Naive thymus-derived CD4-positive, alpha-beta T cell (primary cell): ENCODE measurements at regions of chr17 and their contacts with region 1.

Region 1: GRCh38 chr17:49707608-49708514 is at the start of gene SLC35B1:
- DNase-seq: peak; percentile 89 to 99 (median 97)
- ATAC-seq: peak; percentile 98
- H3K4me3 ChIP-seq: peak within 1 kb of the TSS; percentile 96
- H3K4me3 Mint-ChIP-seq: peak within 1 kb of the TSS; percentile 91 to 97 (median 96)
- H3K27ac ChIP-seq: peak within 1 kb of the TSS; percentile 94
- H3K27ac Mint-ChIP-seq: peak within 1 kb of the TSS; percentile 89 to 99 (median 96)
- H3K4me1 ChIP-seq: peaks cover 22 to 27% of the 10 kb centered on the region in 2 donors
- H3K4me1 Mint-ChIP-seq: peaks cover 30 to 47% (median 42%) of the 10 kb centered on the region in 7 donors
- H3K27me3 ChIP-seq: no peaks in the 10 kb centered on the region
- H3K27me3 Mint-ChIP-seq: no peaks in the 10 kb centered on the region
- total RNA-seq, gene SLC35B1: 42.1 to 83.0 (median 49.0) TPM

Region 2: DNA sequence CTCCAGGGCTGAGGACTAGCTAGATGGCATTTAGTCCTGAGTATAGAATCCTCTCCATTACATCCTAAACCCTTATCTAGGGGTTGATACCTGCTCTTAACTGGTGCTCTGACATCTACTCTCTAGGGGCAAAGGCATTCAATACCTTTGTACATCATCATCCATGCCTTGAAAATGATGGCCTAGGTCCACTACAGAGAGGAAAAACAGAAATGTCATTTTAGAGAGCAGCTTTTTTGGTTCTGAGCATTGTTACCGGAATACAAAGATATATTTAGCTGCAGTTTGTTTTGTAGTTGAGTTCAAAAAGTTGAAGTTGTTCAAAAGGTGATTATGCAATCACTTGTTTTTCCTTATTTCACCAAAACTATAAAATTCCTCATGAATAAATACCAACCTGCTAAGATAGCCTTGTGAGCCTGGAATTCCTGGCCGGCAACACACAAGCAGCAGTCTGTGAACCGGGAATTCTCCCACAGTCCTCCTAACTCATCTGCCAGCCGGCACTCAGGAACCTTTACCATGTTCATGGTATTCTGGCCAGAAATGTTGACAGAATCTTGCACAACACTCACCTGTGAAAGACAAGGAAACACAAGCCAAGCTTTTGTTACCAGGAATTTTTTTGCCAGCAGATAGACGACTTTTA is 96.9 kb before region 1 on chr17:
- CTCF ChIA-PET with region 1: no interaction called
- POLR2A ChIA-PET with region 1: no interaction called
- intact Hi-C with region 1: no loop called
- DNase-seq: no peak
- ATAC-seq: no peak
- H3K4me3 ChIP-seq: no peak overlapping the region
- H3K4me3 Mint-ChIP-seq: no peak overlapping the region
- H3K27ac ChIP-seq: no peak overlapping the region
- H3K27ac Mint-ChIP-seq: peak overlapping the region in 1 of 9 donors; percentile 38
- H3K4me1 ChIP-seq: no peaks in the 10 kb centered on the region
- H3K4me1 Mint-ChIP-seq: peaks cover 0 to 5% (median 0%) of the 10 kb centered on the region in 7 donors
- H3K27me3 ChIP-seq: no peaks in the 10 kb centered on the region
- H3K27me3 Mint-ChIP-seq: no peaks in the 10 kb centered on the region

Region 3: DNA sequence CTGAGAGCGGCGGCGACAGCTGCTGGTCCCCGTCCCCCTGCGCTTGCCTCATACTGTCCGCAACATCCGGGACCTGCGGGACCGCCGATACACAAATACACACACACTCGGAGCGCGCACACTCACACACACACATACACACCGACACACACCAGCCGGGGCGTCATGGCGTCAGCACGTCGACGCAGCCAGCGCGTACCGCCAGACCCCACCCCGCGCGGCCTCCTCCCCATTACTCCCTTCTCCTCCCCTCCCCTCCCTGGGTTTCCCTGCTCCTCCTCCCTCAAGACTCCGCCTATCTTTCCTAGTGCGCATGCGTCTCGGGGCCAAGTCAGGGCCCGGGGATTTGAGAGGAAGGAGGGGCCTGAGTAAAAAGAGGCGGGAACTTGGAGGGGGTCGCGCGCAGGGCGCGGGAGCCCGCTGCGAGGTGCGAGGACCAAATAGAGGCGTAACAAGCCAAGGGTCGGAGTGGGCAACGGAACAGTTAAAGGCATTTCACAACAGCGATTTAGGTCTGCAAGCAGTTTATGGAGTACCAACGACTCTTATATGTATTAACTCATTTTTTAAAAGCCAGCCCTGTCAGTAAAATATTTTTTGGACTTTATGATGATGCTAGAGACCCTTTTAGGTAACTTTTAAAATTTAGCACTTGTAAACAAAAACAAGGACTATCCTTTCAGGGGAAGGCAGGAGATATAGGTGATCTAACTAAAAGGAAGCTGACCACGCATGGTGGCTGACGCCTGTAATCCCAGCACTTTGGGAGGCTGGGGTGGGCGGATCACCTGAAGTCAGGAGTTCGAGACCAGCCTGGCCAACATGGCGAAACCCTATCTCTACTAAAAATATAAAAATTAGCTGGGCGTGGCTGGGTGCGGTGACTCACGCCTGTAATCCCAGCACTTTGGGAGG is 29.7 kb before region 1 on chr17 and contains the start of gene SPOP:
- CTCF ChIA-PET with region 1: interaction called, 6 read pairs
- POLR2A ChIA-PET with region 1: interaction called, 4 read pairs
- intact Hi-C with region 1: loop called (anchors 1 kb)
- DNase-seq: peak; percentile 94 to 100 (median 99)
- ATAC-seq: peak; percentile 98
- H3K4me3 ChIP-seq: peak within 1 kb of the TSS; percentile 88
- H3K4me3 Mint-ChIP-seq: peak within 1 kb of the TSS; percentile 88 to 98 (median 94)
- H3K27ac ChIP-seq: peak within 1 kb of the TSS; percentile 87
- H3K27ac Mint-ChIP-seq: peak within 1 kb of the TSS; percentile 94 to 100 (median 98)
- H3K4me1 ChIP-seq: peaks cover 25 to 26% of the 10 kb centered on the region in 2 donors
- H3K4me1 Mint-ChIP-seq: peaks cover 36 to 65% (median 47%) of the 10 kb centered on the region in 7 donors
- H3K27me3 ChIP-seq: no peaks in the 10 kb centered on the region
- H3K27me3 Mint-ChIP-seq: peaks cover 0 to 13% (median 0%) of the 10 kb centered on the region in 5 donors
- total RNA-seq, gene SPOP: 59.6 to 94.8 (median 80.9) TPM

Region 4: GRCh38 chr17:49730078-49730784 is 22.4 kb after region 1 on chr17:
- CTCF ChIA-PET with region 1: interaction called, 5 read pairs
- POLR2A ChIA-PET with region 1: interaction called, 13 read pairs
- intact Hi-C with region 1: no loop called
- DNase-seq: no peak
- ATAC-seq: no peak
- H3K4me3 ChIP-seq: no peak overlapping the region
- H3K4me3 Mint-ChIP-seq: no peak overlapping the region
- H3K27ac ChIP-seq: peak overlapping the region; percentile 23
- H3K27ac Mint-ChIP-seq: peak overlapping the region in 3 of 9 donors; percentile 38 to 84 (median 52)
- H3K4me1 ChIP-seq: peaks cover 21 to 27% of the 10 kb centered on the region in 2 donors
- H3K4me1 Mint-ChIP-seq: peaks cover 35 to 71% (median 56%) of the 10 kb centered on the region in 7 donors
- H3K27me3 ChIP-seq: no peaks in the 10 kb centered on the region
- H3K27me3 Mint-ChIP-seq: no peaks in the 10 kb centered on the region

Region 5: DNA sequence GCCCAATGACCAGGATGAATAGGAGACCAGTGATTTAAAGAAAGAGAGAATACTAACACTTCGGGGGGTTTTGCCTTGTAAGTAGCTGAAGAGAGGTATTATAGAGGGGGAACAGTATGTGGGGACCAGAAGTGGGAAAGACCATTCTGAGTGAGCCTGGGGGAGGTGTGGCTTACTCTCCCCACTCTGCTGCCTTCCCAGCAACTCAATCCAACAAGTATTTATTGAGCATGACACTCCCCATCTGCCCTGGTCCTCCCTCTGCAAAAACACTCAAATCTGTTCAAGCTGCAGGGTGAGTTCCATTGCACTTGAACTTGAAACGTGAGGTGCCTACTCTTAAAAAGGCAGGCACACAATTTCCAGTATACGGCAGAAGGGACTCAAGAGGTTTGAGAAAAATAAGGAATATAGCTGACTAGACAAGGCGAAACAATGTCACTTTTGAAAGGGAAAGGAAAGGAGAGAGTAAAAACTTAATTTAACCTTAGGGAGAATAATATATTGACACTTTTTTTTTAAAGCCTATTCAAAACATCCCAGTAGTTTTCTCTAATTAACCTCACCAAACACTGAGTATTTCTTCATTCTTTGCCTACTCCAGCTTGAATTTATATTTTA is 47.9 kb after region 1 on chr17:
- CTCF ChIA-PET with region 1: interaction called, 5 read pairs
- POLR2A ChIA-PET with region 1: interaction called, 95 read pairs
- intact Hi-C with region 1: no loop called
- DNase-seq: no peak
- ATAC-seq: no peak
- H3K4me3 ChIP-seq: no peak overlapping the region
- H3K4me3 Mint-ChIP-seq: peak overlapping the region in 9 of 10 donors; percentile 16 to 69 (median 58)
- H3K27ac ChIP-seq: peak overlapping the region; percentile 34
- H3K27ac Mint-ChIP-seq: peak overlapping the region; percentile 39 to 93 (median 77)
- H3K4me1 ChIP-seq: peaks cover 42 to 71% of the 10 kb centered on the region in 2 donors
- H3K4me1 Mint-ChIP-seq: peaks cover 50 to 85% (median 78%) of the 10 kb centered on the region in 7 donors
- H3K27me3 ChIP-seq: no peaks in the 10 kb centered on the region
- H3K27me3 Mint-ChIP-seq: no peaks in the 10 kb centered on the region

Region 6: DNA sequence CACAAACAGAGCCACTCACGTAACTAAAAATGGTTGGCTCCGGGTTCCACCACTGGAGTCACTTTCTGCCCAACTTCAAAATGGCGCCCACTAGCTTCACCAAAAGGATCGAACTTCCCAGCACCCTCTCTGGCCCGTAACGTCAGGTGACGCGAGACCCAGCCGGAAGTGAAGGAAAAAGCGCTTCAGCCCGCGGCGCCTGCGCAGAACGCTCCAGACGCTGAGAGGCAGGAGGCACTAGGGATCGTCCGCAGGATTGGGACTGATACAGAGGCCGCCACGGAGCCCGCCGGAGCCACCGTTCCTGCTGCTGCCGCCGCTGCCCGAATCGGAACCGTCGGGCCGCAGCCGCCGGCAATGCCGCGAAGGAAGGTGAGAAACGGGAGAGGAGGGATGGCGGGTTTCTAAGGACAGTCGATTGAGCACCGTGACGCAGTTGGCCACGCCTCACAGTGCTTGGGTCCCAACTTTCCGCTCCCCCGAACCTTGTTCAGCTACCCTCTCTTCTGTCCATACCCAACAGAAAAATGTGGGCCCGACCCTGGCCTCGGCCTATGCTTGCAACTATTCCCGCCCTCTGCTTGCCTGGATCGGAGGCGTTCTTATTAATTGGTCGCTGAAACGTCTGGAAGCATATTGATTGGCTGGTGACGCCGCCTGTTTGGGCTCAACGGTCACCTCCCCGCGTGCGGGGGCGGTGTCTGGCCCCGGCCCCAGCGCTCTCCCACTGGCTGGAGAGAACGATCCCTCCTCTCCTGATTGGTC is 80.8 kb after region 1 on chr17 and contains the start of gene KAT7:
- CTCF ChIA-PET with region 1: interaction called, 12 read pairs
- POLR2A ChIA-PET with region 1: interaction called, 22 read pairs
- intact Hi-C with region 1: loop called (anchors 1 kb)
- DNase-seq: peak; percentile 90 to 99 (median 99)
- ATAC-seq: peak; percentile 90
- H3K4me3 ChIP-seq: peak within 1 kb of the TSS; percentile 98
- H3K4me3 Mint-ChIP-seq: peak within 1 kb of the TSS; percentile 92 to 99 (median 96)
- H3K27ac ChIP-seq: peak within 1 kb of the TSS; percentile 98
- H3K27ac Mint-ChIP-seq: peak within 1 kb of the TSS; percentile 91 to 99 (median 98)
- H3K4me1 ChIP-seq: peaks cover 17 to 30% of the 10 kb centered on the region in 2 donors
- H3K4me1 Mint-ChIP-seq: peaks cover 39 to 62% (median 58%) of the 10 kb centered on the region in 7 donors
- H3K27me3 ChIP-seq: no peaks in the 10 kb centered on the region
- H3K27me3 Mint-ChIP-seq: peaks cover 0 to 8% (median 0%) of the 10 kb centered on the region in 5 donors
- total RNA-seq, gene KAT7: 85.6 to 195 (median 132) TPM

Region 7: DNA sequence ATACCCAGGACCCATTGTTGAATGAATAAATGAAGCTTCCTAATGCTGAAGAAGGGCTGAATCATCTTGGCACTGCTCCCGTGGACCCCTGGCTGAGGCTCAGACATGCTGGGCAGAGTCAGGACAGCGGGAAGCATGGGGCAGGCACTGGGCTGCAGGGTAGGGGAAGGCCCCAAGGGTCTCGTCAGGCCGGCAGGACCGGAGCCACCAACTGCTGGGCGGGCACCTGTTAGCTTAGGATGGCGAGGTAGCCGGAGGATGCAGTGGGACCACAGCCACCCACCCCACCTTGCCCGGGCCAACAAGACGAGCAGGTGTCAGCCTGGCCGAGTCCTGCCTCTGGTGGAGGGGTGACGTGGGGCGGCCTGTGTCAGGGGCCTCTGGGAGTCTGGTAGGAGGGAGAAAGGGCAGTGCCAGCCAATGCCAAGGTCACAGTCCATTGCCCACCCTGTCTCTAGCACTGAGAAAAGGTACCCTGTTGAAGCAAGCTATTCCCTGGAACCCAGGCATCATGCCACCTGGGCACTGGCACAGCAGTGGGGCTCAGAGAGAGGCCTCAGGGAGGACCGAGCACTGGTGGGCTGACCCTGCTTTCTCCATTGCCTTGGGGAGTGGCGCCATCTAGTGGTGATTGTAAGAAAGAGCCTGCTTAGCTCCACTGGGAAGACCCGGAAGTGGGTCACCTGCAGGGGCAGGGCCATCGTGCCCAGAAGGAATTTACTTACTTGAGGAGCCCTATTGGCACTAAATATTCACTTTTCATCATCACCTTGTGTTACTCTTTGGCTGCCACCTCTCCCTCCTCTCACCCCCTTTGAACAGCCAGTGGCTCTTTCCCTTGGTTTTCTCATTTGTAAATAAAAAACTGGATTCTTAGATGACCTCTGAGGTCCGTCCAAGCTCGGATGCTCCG is 290.2 kb after region 1 on chr17:
- CTCF ChIA-PET with region 1: interaction called, 3 read pairs
- POLR2A ChIA-PET with region 1: no interaction called
- intact Hi-C with region 1: loop called in 1 of 2 experiments (anchors 5 kb)
- DNase-seq: peak; percentile 69 to 90 (median 81)
- ATAC-seq: peak; percentile 89
- H3K4me3 ChIP-seq: no peak overlapping the region
- H3K4me3 Mint-ChIP-seq: peak overlapping the region in 2 of 10 donors; percentile 33 to 71
- H3K27ac ChIP-seq: no peak overlapping the region
- H3K27ac Mint-ChIP-seq: no peak overlapping the region
- H3K4me1 ChIP-seq: peaks cover 11 to 30% of the 10 kb centered on the region in 2 donors
- H3K4me1 Mint-ChIP-seq: peaks cover 12 to 40% (median 28%) of the 10 kb centered on the region in 7 donors
- H3K27me3 ChIP-seq: peaks cover 19 to 35% of the 10 kb centered on the region in 2 donors
- H3K27me3 Mint-ChIP-seq: peaks cover 73 to 79% (median 76%) of the 10 kb centered on the region in 5 donors

Region 8: GRCh38 chr17:50221864-50222545 is 514.1 kb after region 1 on chr17:
- CTCF ChIA-PET with region 1: no interaction called
- POLR2A ChIA-PET with region 1: no interaction called
- intact Hi-C with region 1: no loop called
- DNase-seq: no peak
- ATAC-seq: no peak
- H3K4me3 ChIP-seq: no peak overlapping the region
- H3K4me3 Mint-ChIP-seq: no peak overlapping the region
- H3K27ac ChIP-seq: no peak overlapping the region
- H3K27ac Mint-ChIP-seq: no peak overlapping the region
- H3K4me1 ChIP-seq: no peaks in the 10 kb centered on the region
- H3K4me1 Mint-ChIP-seq: peaks cover 0 to 10% (median 4%) of the 10 kb centered on the region in 7 donors
- H3K27me3 ChIP-seq: no peaks in the 10 kb centered on the region
- H3K27me3 Mint-ChIP-seq: peaks cover 0 to 20% (median 0%) of the 10 kb centered on the region in 5 donors